ENCODE measurements at regions of chr21 and their contacts with region 1.

Region 1: DNA sequence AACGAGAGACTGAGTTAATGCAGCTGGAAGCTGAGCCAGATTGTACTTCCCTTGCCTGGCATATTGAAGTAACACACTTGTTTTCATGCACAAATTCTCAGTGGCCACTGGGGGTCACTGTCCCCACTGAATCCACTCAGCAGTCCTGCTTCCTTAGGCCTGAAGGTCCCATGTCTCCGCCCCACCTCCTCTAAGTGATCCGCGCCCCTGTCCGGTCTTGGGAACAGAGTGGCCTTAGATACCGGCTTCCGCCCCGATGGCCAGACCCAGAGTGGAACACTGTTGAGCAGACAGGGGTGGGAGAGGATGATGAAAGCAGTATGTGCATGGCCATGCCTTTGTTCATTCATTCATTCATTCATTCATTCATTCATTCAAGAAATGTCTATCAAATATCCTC is 34.8 kb downstream of the CHAF1B start:
- DNase-seq: peak; percentile 68
- H3K4me3 ChIP-seq: no peak overlapping the region
- H3K27ac ChIP-seq: no peak overlapping the region
- H3K4me1 ChIP-seq: no peaks in the 10 kb centered on the region
- H3K27me3 ChIP-seq: no peaks in the 10 kb centered on the region
- CTCF ChIP-seq: peak; percentile 60

Region 2: DNA sequence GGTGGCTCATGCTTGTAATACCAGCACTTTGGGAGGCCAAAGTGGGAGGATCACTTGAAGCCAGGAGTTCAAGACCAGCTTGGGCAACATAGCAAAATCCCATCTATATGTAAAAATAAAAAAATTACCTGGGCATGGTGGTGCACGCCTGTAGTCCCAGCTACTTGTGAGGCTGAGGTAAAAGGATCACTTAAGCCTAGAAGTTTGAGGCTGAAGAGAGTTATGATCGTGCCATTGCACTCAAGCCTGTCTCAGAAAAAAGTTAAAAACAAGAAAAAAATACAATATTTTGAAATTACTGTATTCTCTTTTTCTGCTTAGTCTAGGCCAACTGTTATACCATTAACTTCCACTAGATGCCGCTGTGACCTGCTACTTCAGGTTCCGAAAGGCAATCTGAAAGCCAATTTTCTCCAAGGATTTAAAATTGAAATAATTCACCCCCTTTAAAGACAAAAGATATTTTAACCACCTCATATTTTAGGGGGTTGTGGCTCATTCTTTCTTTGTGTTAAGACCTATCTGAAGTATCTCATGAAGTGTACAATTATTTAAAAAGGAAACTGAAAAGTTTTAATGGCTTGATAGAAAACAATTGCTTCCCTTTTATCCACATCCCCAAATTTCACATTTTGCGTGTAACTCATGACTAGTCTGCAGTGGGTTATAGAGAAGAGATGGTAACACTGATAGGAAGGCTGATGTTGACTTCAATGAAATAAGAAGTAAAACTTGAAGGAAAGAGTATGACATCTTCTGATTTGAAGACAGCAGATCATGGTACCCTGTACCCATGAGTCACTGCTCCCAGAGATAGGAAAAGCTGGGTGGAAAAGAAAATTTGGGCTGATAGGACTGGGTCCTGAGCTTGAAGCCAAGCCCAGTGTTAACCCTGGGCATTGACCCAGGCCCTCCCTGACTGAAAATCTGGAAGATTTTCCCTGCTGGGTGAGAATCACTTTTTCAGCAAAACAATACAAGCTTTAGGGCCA is 84.4 kb after region 1 on chr21:
- intact Hi-C with region 1: no loop called
- DNase-seq: peak; percentile 48
- H3K4me3 ChIP-seq: no peak overlapping the region
- H3K27ac ChIP-seq: no peak overlapping the region
- H3K4me1 ChIP-seq: no peaks in the 10 kb centered on the region
- H3K27me3 ChIP-seq: no peaks in the 10 kb centered on the region
- CTCF ChIP-seq: peak; percentile 90

Region 3: GRCh38 chr21:36542312-36543107 is 122.5 kb after region 1 on chr21:
- intact Hi-C with region 1: no loop called
- DNase-seq: no peak
- H3K4me3 ChIP-seq: no peak overlapping the region
- H3K27ac ChIP-seq: no peak overlapping the region
- H3K4me1 ChIP-seq: no peaks in the 10 kb centered on the region
- H3K27me3 ChIP-seq: peaks cover 5% of the 10 kb centered on the region
- CTCF ChIP-seq: no peak

Region 4: DNA sequence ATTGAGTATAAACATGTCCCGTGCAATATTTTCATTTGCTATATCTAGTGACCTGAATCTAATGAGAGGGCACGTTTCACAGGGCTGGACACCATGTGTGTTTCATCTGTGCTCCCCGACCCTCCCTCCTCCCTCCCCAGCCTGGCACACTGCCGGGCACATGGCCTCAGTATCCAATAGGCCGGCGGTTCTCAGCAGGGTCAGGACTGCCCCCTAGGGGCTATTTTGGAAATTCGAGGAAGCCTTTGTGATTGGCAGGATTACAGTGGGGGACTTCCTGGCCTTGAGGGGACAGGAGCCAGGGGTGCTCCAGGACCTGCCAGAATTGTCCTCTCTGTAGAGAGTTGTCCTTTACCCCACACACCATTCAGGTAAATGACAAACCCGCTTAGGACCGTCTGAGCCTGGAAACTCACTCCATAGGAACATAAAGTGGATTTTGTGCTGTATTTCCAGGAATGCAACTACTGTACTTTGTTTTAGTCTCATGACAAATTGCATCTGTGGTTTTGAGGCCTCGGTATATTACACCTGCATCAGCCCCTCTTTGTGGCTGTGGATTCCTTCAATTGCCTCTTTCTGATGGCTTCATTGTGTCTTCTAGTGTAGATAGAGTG is 169.5 kb after region 1 on chr21:
- intact Hi-C with region 1: loop called (anchors 5 kb)
- DNase-seq: peak; percentile 39
- H3K4me3 ChIP-seq: no peak overlapping the region
- H3K27ac ChIP-seq: no peak overlapping the region
- H3K4me1 ChIP-seq: no peaks in the 10 kb centered on the region
- H3K27me3 ChIP-seq: no peaks in the 10 kb centered on the region
- CTCF ChIP-seq: peak; percentile 33

Region 5: GRCh38 chr21:36747815-36748383 is 327.9 kb after region 1 on chr21:
- intact Hi-C with region 1: no loop called
- DNase-seq: peak; percentile 54
- H3K4me3 ChIP-seq: peak overlapping the region; percentile 44
- H3K27ac ChIP-seq: no peak overlapping the region
- H3K4me1 ChIP-seq: no peaks in the 10 kb centered on the region
- H3K27me3 ChIP-seq: peaks cover 8% of the 10 kb centered on the region
- CTCF ChIP-seq: no peak

Measured in colonic mucosa (tissue), 4 donors.